ENCODE measurements at regions of chr12 and their contacts with region 1.

Region 1: GRCh38 chr12:25592725-25593495 is 39.8 kb upstream of the LMNTD1 start:
- DNase-seq: no peak
- ATAC-seq: no peak
- H3K4me3 ChIP-seq: no peak overlapping the region
- H3K27ac ChIP-seq: no peak overlapping the region
- H3K4me1 ChIP-seq: no peaks in the 10 kb centered on the region
- H3K27me3 ChIP-seq: no peaks in the 10 kb centered on the region
- CTCF ChIP-seq: no peak
- POLR2A ChIP-seq: no peak
- RAD21 ChIP-seq: no peak

Region 2: DNA sequence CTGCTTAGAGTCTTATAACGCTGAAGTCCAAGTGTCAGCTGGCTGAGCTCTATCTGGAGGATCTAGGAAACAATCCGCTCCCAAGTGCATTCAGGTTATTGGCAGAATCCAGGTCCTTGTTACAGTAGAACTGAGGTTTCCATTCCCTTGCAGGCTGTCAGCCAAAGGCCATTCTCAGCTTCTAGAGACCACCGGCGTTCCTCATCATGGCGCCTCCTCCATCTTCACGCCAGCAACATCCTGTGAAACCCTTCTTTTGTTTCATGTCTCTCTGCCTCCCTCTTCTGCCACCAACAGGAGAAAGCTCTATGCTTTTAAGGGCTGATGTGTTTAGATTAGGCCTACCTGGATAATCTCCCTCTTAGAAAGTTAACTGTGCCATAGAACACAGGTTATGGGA is 232.5 kb after region 1 on chr12:
- CTCF ChIA-PET with region 1: no interaction called
- POLR2A ChIA-PET with region 1: no interaction called
- RAD21 ChIA-PET with region 1: interaction called in 1 of 2 experiments, 10 read pairs
- intact Hi-C with region 1: no loop called
- DNase-seq: no peak
- ATAC-seq: no peak
- H3K4me3 ChIP-seq: no peak overlapping the region
- H3K27ac ChIP-seq: no peak overlapping the region
- H3K4me1 ChIP-seq: no peaks in the 10 kb centered on the region
- H3K27me3 ChIP-seq: peaks cover 1% of the 10 kb centered on the region; the same call in 1 of the 2 replicates
- CTCF ChIP-seq: 0 out of 6 replicates have a peak, but pooled peaks of 1 of the 3 experiments have one; percentile 5
- POLR2A ChIP-seq: no peak
- RAD21 ChIP-seq: peak; percentile 37; the same call in 1 of the 2 replicates